ENCODE measurements at regions of chr3 and their contacts with region 1.

Region 1: DNA sequence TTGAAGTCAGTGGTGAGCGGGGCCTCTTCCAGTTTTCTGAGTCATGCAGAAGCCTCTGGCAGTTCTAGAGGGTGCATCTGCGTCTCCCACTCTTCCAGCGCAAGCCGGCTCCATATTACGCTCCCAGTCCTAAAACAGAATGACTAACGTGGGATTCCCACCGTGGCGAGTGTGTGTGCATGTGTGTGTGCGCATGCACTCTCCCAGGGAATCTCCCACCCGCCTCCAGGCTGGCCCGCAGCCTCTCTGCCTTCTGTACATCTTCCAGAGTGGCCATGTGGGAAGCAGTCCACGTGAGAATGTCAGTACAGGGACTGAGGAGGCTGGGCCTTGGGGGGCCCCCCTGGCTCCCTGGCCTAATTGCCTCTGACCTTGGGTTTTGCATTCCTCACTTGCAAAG is 87.7 kb downstream of the LSM3 start:
- DNase-seq: peak; percentile 54
- ATAC-seq: peak; percentile 70 to 91

Region 2: GRCh38 chr3:14234251-14235002 is 31.9 kb before region 1 on chr3:
- intact Hi-C with region 1: no loop called
- DNase-seq: peak; percentile 72
- ATAC-seq: peak; percentile 38 to 78

Region 3: GRCh38 chr3:14317057-14317553 is 50.7 kb after region 1 on chr3:
- intact Hi-C with region 1: loop called in 1 of 2 experiments (anchors 2 kb)
- DNase-seq: no peak
- ATAC-seq: no peak